ENCODE measurements at regions of chr9 and their contacts with region 1.

Region 1: DNA sequence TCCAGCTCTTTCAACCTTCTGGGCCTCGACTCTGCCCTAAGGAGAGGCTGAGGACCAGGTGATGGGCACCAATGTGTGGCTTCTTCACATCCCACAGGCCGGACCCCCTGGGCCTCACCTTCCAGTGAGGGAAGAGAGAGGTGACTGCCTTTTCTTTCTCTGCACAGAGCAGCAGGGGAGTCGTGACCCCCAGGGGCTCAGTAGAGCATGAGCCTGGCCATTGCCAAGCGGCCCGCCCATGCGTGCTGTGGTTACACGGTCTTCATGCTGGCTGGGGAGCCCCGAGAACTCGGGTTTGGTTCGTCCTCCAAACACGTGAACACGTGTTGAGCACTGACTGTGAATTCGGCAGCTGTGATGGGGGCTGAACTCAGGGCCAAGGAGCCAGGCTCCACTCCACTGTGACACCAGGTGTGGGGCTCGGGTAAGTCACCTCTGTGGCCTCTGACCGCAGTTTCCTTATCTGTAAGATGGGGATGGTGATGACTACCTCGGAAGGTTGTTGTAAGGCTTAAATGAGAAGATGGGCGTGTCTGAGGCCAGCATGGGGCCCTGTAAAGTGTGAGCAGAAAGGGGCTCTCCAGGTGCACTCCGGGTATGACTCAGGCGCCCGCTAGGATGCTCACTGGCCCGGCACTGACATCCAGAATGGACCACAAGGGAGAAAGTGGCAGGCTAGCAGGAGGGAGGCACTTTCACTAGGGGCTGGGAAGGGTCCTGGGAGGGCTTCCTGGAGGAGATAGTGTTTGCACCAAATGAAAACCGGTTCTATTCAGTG is 13.4 kb upstream of the GRHPR start:
- DNase-seq: peak; percentile 100
- H3K4me3 ChIP-seq: peak overlapping the region; percentile 74
- H3K27ac ChIP-seq: peak overlapping the region; percentile 97
- H3K4me1 ChIP-seq: peaks cover 98% of the 10 kb centered on the region
- CTCF ChIP-seq: 0 out of 2 replicates have a peak, but pooled peaks have one; percentile 29

Region 2: DNA sequence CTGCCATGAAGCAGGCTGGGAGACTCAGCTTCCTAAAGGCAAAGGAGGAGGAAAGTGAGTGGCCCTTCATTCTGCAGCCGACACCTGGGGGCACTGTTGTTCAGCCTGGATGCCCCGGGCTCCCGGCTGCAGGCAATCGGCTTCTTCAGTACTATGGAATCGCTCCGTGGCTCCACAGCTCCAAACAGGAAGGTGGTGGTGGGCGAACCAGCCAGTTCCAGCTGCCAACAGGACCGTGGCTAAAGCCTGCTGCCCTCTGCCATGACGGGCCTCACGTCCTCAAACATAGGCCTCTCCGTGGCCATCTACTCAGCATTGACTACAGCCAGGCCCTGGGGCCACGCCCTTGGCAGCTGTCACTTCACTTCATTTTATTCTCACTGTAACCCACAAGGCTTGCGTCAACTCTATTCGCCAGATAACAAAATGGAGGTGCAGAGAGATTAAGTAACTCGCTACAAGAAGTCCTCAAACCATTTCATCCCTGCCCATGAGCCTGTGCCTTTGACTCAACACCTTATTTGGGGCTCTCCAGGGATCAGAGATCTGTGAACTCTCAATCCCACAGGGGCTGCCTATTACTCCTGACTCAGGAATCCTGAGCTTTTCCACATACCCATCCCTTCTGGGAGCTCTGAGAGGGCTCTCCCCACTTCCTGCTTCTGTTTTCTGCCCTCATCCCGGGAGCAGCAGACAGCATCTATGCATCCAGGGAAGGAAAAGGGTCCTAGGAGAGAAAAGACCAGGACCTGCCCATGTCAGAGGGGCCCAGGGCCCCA is 413.0 kb before region 1 on chr9:
- CTCF ChIA-PET with region 1: no interaction called
- POLR2A ChIA-PET with region 1: no interaction called
- intact Hi-C with region 1: loop called (anchors 5 kb)
- DNase-seq: peak; percentile 57
- H3K4me3 ChIP-seq: peak overlapping the region; percentile 17
- H3K27ac ChIP-seq: peak overlapping the region; percentile 64
- H3K4me1 ChIP-seq: peaks cover 87% of the 10 kb centered on the region
- CTCF ChIP-seq: peak; percentile 84

Region 3: DNA sequence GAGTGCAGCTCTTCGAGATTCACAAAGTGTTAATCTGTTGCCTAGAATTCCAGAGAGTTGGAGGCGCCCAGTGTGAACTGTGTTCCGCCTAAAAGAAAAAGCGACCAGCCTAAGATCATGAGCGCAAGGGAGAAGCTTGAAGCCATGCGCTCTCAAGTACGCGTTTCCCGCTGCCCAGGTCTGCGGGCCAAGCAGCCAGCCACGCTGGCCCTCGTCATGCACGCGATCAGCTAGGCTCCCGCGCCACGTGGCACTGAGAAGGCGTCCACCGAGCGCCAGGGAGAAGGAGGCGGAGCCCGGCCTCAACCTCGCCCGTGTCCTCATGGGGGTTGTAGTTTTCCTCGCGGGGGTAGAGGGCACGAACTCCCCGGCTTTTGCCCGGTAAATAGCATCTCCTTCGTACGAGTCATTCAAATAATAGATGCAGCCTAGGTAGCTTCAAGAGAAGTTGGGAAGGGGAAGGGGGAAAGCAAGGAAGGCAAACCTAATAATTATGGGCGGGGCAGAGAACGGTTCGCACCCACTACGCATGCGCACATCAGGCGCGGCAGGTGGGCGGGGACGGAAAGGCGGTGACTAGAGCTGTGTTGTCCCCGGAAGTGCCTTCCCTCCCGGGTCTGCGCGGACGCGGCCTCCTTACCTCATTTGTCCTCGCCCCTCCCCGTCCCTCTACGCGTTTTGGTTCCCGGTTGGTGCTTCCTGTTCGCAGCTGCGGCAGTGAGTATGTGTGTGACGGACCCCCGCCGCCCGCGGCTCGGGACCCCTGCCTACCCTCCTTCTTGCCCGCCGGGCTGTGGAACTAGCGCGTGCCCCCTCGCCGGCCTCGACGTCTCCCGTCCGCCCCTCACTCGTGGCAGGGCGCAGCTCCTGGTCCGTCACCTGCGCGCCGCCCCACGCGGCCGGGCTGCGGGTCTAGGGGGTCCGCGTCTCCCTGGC is 288.9 kb before region 1 on chr9 and contains the start of gene ZCCHC7:
- CTCF ChIA-PET with region 1: interaction called, 13 read pairs
- POLR2A ChIA-PET with region 1: no interaction called
- intact Hi-C with region 1: loop called (anchors 5 kb)
- DNase-seq: peak; percentile 96
- H3K4me3 ChIP-seq: peak within 1 kb of the TSS; percentile 96
- H3K27ac ChIP-seq: peak within 1 kb of the TSS; percentile 65
- H3K4me1 ChIP-seq: peaks cover 43% of the 10 kb centered on the region
- CTCF ChIP-seq: no peak
- total RNA-seq, gene ZCCHC7: 108 and 110 TPM in 2 replicates

Region 4: DNA sequence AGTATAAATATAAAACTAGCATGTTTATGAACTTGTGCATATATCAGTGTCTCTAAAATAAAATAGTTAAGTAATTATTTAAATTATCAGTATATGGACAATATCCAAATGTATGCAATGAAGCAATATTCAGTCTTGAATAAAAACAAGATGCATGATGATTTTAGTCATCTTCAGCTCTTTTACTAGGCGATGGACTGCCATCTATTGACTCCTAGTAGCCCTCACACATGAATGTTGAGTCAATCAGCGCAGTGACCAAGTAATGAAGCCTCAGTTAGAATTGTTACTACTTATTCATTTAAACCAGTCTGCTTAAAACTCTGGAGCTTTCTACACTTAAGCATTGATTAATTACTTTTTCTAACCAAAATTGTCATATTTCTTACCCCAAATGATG is 79.5 kb before region 1 on chr9:
- CTCF ChIA-PET with region 1: interaction called, 4 read pairs
- POLR2A ChIA-PET with region 1: interaction called, 19 read pairs
- intact Hi-C with region 1: loop called (anchors 2 kb)
- DNase-seq: peak; percentile 88
- H3K4me3 ChIP-seq: peak overlapping the region; percentile 44
- H3K27ac ChIP-seq: peak overlapping the region; percentile 98
- H3K4me1 ChIP-seq: peaks cover 99% of the 10 kb centered on the region
- CTCF ChIP-seq: peak; percentile 96

Region 5: DNA sequence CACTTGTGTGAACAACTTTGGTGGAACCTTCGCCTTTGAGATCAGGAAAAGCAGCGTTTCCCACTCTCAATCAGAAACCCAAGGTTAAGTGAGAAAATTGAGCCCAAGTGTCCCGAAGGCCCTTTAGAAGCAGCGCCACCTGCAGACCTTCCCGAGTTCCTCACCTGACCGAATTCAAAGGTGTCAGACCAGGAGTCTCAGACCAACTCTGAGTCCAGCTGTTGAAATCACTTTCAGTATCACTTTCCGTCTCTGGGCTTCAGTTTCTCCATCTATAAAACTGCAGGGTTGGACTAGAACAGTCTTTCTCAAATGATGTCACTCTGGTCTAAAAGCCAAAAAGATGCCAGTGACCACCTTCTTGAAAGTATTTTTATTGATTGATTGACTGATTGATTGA is 18.4 kb before region 1 on chr9:
- CTCF ChIA-PET with region 1: interaction called, 6 read pairs
- POLR2A ChIA-PET with region 1: interaction called, 29 read pairs
- intact Hi-C with region 1: no loop called
- DNase-seq: peak; percentile 92
- H3K4me3 ChIP-seq: no peak overlapping the region
- H3K27ac ChIP-seq: peak overlapping the region; percentile 46
- H3K4me1 ChIP-seq: peaks cover 82% of the 10 kb centered on the region
- CTCF ChIP-seq: peak; percentile 96

Region 6: GRCh38 chr9:37471942-37472679 is 63.0 kb after region 1 on chr9:
- CTCF ChIA-PET with region 1: no interaction called
- POLR2A ChIA-PET with region 1: no interaction called
- intact Hi-C with region 1: no loop called
- DNase-seq: no peak
- H3K4me3 ChIP-seq: peak overlapping the region; percentile 39
- H3K27ac ChIP-seq: no peak overlapping the region
- H3K4me1 ChIP-seq: peaks cover 8% of the 10 kb centered on the region
- CTCF ChIP-seq: no peak

Region 7: GRCh38 chr9:37540634-37541033 is 131.5 kb after region 1 on chr9:
- CTCF ChIA-PET with region 1: no interaction called
- POLR2A ChIA-PET with region 1: no interaction called
- intact Hi-C with region 1: no loop called
- DNase-seq: no peak
- H3K4me3 ChIP-seq: no peak overlapping the region
- H3K27ac ChIP-seq: no peak overlapping the region
- H3K4me1 ChIP-seq: no peaks in the 10 kb centered on the region
- CTCF ChIP-seq: no peak

Measured in OCI-LY7 (cell line).